Heart left ventricle (tissue), 16 donors: ENCODE measurements at regions of chr19 and their contacts with region 1.

Region 1: DNA sequence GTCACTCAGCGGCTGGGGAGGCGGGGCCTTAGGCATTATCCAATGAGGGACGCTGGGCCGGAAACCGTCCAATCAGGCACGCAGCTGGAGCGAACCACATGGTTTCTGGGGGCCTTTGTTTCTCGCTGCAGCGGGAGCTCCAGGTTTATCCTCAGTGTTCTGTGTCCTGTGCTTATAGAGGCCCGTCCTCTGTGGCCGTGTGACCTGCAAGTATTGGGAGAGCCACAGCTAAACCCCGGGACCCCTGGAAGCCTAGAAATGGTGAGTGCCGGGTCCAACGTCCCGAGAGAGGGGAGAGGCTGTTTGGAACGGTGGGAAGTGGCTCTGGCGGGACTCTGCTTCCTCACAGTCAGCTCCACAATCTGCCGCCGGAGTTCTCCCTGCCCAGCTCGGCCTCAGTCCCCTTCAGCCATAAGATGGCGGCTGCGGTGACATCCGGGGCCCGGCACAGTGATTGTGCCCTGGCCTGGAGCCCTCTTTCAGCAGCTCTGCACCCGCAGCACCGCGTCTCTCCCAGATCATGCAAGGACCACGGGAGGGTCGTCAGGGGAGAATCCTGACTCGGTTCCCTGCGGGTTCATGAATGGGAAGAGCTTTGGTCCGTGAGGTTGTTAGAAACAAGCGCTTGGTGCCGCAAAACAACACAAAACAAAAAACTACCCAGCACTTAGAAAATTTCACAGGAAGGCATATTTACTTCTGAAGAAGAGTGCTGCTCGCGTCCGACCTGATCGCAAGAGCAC is at the start of gene ZNF253:
- DNase-seq: peak; percentile 97 to 99 (median 98)
- ATAC-seq: peak; percentile 99 to 100 (median 99)
- H3K4me3 ChIP-seq: peak within 1 kb of the TSS; percentile 53 to 93 (median 84)
- H3K27ac ChIP-seq: peak within 1 kb of the TSS; percentile 80 to 97 (median 94)
- H3K4me1 ChIP-seq: peaks cover 0 to 42% (median 25%) of the 10 kb centered on the region in 12 donors
- H3K27me3 ChIP-seq: peaks cover 0 to 3% (median 0%) of the 10 kb centered on the region in 9 donors
- CTCF ChIP-seq: no peak
- POLR2A ChIP-seq: peak; percentile 74 to 95
- total RNA-seq, gene ZNF253: 5.6 to 16.6 (median 8.1) TPM

Region 2: DNA sequence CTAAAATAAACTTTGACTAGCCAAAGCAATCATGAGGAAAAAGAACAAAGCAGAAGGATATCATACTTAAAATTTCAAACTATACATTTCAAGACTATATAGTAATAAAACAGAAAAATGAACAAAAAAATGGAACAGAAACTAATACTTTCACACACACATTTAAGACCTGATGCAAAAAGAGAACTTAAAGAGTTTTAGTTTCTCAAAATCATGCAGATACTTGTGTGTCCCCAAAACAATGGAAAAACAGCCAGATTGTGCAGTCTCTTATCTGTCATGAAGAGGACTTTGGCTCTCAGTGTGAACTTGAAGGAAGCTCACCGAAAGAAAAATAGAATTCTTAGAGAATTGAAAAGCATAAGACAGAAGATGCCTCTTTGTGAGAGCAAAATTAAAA is 60.4 kb before region 1 on chr19:
- intact Hi-C with region 1: no loop called
- DNase-seq: no peak
- ATAC-seq: no peak
- H3K4me3 ChIP-seq: no peak overlapping the region
- H3K27ac ChIP-seq: no peak overlapping the region
- H3K4me1 ChIP-seq: peaks cover 0 to 4% (median 0%) of the 10 kb centered on the region in 12 donors
- H3K27me3 ChIP-seq: no peaks in the 10 kb centered on the region
- CTCF ChIP-seq: no peak
- POLR2A ChIP-seq: no peak

Region 3: DNA sequence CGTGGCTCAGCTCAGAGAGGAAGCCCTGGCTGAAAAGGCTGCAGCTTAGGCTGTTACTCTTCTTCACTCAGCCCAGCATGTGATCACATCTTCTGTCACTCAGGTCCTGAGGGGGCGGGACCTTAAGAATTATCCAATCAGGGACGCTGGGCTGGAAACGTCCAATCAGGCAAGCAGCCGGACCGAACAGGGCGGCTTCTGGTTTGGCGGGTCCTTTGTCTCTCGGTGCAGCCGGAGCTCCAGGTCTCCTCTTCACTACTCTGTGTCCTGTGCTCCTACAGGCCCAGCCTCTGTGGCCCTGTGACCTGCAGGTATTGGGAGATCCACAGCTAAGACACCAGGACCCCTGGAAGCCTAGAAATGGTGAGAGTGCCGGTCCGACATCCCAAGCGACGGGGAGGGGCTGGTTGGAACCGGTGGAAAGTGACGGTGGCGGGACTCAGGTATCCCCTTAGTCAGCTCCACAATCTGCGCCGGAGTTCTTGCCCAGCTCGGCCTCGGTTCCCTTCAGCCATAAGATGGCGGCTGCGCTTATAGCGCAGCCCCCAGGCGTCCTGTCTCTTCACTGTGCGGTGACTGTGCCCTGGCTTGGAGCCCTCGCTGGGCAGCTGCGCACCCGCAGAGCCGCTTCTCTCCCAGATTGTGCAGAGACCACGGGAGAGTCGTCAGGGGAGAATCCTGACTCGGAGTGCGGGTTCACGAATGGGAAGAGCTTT is 35.0 kb after region 1 on chr19 and contains the start of gene ZNF93:
- intact Hi-C with region 1: loop called in 3 of 10 experiments (anchors 1 to 5 kb)
- DNase-seq: peak; percentile 93 to 97 (median 95)
- ATAC-seq: peak; percentile 99
- H3K4me3 ChIP-seq: peak within 1 kb of the TSS; percentile 59 to 87 (median 72)
- H3K27ac ChIP-seq: peak within 1 kb of the TSS; percentile 58 to 89 (median 74)
- H3K4me1 ChIP-seq: peaks cover 0 to 11% (median 3%) of the 10 kb centered on the region in 12 donors
- H3K27me3 ChIP-seq: no peaks in the 10 kb centered on the region
- CTCF ChIP-seq: no peak
- POLR2A ChIP-seq: peak in 1 of 2 donors; percentile 57
- total RNA-seq, gene ZNF93: 1.0 to 4.6 (median 2.3) TPM

Region 4: DNA sequence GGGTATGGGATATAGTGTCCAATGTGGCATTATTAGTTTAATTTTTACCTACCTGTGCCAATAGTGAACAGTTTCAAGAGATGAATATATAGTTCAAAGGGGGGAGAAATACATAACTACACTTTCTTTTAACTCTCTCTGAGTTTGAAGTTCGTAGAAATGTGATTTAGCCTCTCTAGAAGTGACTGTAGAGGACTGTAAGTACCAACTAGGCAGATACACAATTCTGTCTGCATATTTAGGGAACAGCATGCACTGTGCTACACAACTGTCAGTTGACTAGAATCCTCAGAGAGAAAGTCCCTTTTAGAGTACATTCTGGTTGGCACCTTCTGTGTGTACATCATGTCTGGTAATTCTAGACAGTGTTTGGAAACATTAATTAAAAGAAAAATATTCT is 194.4 kb after region 1 on chr19:
- intact Hi-C with region 1: no loop called
- DNase-seq: no peak
- ATAC-seq: no peak
- H3K4me3 ChIP-seq: no peak overlapping the region
- H3K27ac ChIP-seq: no peak overlapping the region
- H3K4me1 ChIP-seq: no peaks in the 10 kb centered on the region
- H3K27me3 ChIP-seq: peaks cover 0 to 4% (median 0%) of the 10 kb centered on the region in 9 donors
- CTCF ChIP-seq: no peak
- POLR2A ChIP-seq: no peak